CD8-positive, alpha-beta T cell (primary cell): ENCODE measurements at regions of chr21 and their contacts with region 1.

Region 1: DNA sequence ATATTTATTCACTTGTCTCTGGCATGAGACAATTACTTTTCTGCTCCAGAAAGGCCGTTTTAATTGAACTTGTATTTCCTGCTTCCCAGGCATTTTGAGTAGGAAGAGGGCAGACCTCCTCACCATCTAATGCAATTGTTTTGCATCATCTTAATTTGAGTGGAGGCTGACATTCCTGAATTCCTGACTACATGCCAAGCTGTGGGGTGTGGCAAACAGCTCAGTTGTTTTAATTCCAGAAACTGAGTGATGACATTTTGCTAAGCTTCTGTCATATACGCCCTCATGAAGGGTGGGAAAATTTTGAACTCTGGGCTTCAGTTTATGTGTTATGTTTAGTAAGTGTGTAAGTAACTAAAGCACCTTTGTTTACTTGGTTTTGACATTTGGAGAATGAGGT is 125.4 kb upstream of the USP25 start:
- DNase-seq: no peak
- ATAC-seq: no peak
- H3K4me3 ChIP-seq: no peak overlapping the region
- H3K4me3 Mint-ChIP-seq: no peak overlapping the region
- H3K27ac ChIP-seq: no peak overlapping the region
- H3K27ac Mint-ChIP-seq: no peak overlapping the region
- H3K4me1 ChIP-seq: no peaks in the 10 kb centered on the region
- H3K4me1 Mint-ChIP-seq: no peaks in the 10 kb centered on the region
- H3K27me3 ChIP-seq: no peaks in the 10 kb centered on the region
- H3K27me3 Mint-ChIP-seq: peaks cover 9% of the 10 kb centered on the region
- CTCF ChIP-seq: no peak

Region 2: GRCh38 chr21:15688809-15689208 is 84.4 kb after region 1 on chr21:
- CTCF ChIA-PET with region 1: no interaction called
- POLR2A ChIA-PET with region 1: no interaction called
- intact Hi-C with region 1: loop called in 1 of 2 experiments (anchors 1 kb)
- DNase-seq: peak in 2 of 9 experiments; percentile 32 to 54
- ATAC-seq: peak; percentile 23
- H3K4me3 ChIP-seq: no peak overlapping the region
- H3K4me3 Mint-ChIP-seq: no peak overlapping the region
- H3K27ac ChIP-seq: no peak overlapping the region
- H3K27ac Mint-ChIP-seq: no peak overlapping the region
- H3K4me1 ChIP-seq: no peaks in the 10 kb centered on the region
- H3K4me1 Mint-ChIP-seq: peaks cover 10% of the 10 kb centered on the region
- H3K27me3 ChIP-seq: no peaks in the 10 kb centered on the region
- H3K27me3 Mint-ChIP-seq: no peaks in the 10 kb centered on the region
- CTCF ChIP-seq: no peak